ENCODE measurements at regions of chr18 and their contacts with region 1.

Region 1: DNA sequence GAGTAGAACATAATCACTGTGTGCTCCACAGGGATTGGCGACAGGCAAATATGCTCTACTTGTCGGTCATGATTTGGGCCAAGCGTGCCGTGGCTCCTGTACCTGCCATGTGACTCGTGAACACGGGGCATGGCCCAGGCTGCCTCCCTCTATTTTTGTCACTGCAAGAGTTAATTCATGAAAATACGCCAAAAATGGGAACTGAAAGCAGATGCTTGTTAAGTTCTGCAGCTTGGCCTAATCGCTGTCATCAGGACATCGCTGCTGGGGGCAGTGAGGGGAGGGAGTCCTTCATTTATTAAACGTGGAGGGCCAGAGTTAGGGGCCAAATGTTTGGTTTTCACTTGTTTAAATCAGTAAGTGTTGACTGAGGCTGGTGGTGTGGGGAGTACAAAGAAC is 177.8 kb downstream of the BCL2 start:
- DNase-seq: no peak
- H3K4me3 ChIP-seq: no peak overlapping the region
- H3K27ac ChIP-seq: no peak overlapping the region
- H3K27me3 ChIP-seq: peaks cover 13% of the 10 kb centered on the region
- CTCF ChIP-seq: no peak

Region 2: DNA sequence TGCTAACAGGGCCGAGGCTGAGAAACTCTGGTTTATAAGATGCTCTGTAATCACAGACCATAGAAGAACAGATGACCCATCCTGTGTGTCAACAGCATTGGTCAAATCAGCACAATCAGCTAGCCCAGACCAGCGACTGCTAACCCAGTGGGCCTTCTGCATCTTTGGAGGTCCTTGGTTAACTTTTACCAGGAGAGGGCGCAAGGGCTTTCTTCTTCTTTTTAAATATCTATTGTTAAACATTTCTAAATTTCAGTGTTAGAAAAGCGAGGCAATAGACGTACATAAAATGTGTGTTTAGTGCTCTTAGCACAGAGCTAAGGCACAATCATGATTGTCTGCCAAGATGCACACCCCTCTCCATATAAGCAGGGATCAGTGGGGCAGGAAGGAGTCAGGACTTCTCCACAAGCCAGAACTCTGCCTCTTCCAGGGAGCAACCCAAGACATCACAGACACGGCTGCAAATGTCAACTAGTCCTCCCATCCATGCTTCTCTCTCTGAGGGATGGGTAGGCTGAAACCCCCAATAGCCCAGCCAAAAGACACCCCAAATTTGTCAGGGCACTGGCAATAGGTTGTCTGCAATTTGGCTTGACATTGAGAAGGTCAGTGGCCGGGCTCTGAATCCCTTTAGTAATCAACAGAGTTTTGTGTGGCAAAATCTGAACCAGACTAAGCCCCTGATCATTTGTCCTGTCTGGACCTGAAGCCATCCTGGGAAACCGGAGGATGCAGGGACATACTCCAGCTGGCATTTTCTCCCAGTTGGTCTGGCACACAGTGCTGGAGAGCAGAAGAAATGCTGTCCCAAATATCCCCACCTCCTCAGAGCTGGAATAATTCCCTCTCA is 10.4 kb before region 1 on chr18:
- CTCF ChIA-PET with region 1: interaction called, 12 read pairs
- POLR2A ChIA-PET with region 1: no interaction called
- DNase-seq: peak; percentile 16
- H3K4me3 ChIP-seq: no peak overlapping the region
- H3K27ac ChIP-seq: no peak overlapping the region
- H3K27me3 ChIP-seq: peaks cover 14% of the 10 kb centered on the region
- CTCF ChIP-seq: peak; percentile 74

Region 3: DNA sequence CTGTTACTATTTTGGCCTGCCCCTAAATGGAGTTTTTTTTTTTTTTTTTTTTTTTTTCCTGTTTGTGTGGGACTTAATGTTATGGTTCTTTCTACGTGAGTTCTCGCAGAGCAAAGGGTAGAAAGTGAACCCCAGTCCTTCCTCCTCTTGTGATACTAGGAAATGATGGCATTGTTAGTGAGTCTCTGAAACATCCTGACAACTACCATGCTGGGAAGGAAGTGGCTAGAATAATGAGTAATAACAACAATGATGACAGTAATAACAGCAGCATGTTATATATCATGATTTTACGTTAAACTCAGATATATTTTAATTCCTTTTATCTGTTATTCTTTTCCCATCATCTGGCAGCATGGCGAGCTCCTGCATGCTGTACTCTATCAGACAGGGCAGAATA is 1223.3 kb after region 1 on chr18:
- CTCF ChIA-PET with region 1: no interaction called
- POLR2A ChIA-PET with region 1: no interaction called
- DNase-seq: no peak
- H3K4me3 ChIP-seq: no peak overlapping the region
- H3K27ac ChIP-seq: no peak overlapping the region
- H3K27me3 ChIP-seq: no peaks in the 10 kb centered on the region
- CTCF ChIP-seq: no peak